ENCODE measurements at regions of chr6 and their contacts with region 1.

Region 1: GRCh38 chr6:3419624-3420272 is 37.1 kb downstream of the SLC22A23 start:
- DNase-seq: no peak
- ATAC-seq: no peak
- H3K4me3 ChIP-seq: no peak overlapping the region
- H3K27ac ChIP-seq: no peak overlapping the region
- H3K4me1 ChIP-seq: peaks cover 4% of the 10 kb centered on the region
- H3K27me3 ChIP-seq: no peaks in the 10 kb centered on the region
- CTCF ChIP-seq: no peak
- EP300 ChIP-seq: no peak
- POLR2A ChIP-seq: no peak
- RAD21 ChIP-seq: no peak

Region 2: GRCh38 chr6:3239110-3239830 is 180.5 kb before region 1 on chr6:
- CTCF ChIA-PET with region 1: no interaction called
- POLR2A ChIA-PET with region 1: no interaction called
- RAD21 ChIA-PET with region 1: no interaction called
- SMC1A ChIA-PET with region 1: no interaction called
- in situ Hi-C with region 1: no loop called
- intact Hi-C with region 1: no loop called
- DNase-seq: no peak
- ATAC-seq: no peak
- H3K4me3 ChIP-seq: no peak overlapping the region
- H3K27ac ChIP-seq: no peak overlapping the region
- H3K4me1 ChIP-seq: peaks cover 31% of the 10 kb centered on the region
- H3K27me3 ChIP-seq: no peaks in the 10 kb centered on the region; a peak in 1 of 4 replicates
- CTCF ChIP-seq: 0 out of 6 replicates have a peak, but pooled peaks of 1 of the 3 experiments have one; percentile 7
- EP300 ChIP-seq: no peak
- POLR2A ChIP-seq: no peak
- RAD21 ChIP-seq: no peak

Region 3: GRCh38 chr6:3433005-3433404 is 13.3 kb after region 1 on chr6:
- CTCF ChIA-PET with region 1: interaction called, 16 read pairs
- POLR2A ChIA-PET with region 1: interaction called, 16 read pairs
- RAD21 ChIA-PET with region 1: interaction called, 18 read pairs
- SMC1A ChIA-PET with region 1: interaction called, 12 read pairs
- in situ Hi-C with region 1: no loop called
- intact Hi-C with region 1: no loop called
- DNase-seq: no peak
- ATAC-seq: peak; percentile 56
- H3K4me3 ChIP-seq: no peak overlapping the region
- H3K27ac ChIP-seq: no peak overlapping the region
- H3K4me1 ChIP-seq: peaks cover 8% of the 10 kb centered on the region
- H3K27me3 ChIP-seq: no peaks in the 10 kb centered on the region
- CTCF ChIP-seq: peak; percentile 10 to 27 (median 18); a peak in 3 of 6 replicates
- EP300 ChIP-seq: no peak
- POLR2A ChIP-seq: no peak
- RAD21 ChIP-seq: no peak

Region 4: DNA sequence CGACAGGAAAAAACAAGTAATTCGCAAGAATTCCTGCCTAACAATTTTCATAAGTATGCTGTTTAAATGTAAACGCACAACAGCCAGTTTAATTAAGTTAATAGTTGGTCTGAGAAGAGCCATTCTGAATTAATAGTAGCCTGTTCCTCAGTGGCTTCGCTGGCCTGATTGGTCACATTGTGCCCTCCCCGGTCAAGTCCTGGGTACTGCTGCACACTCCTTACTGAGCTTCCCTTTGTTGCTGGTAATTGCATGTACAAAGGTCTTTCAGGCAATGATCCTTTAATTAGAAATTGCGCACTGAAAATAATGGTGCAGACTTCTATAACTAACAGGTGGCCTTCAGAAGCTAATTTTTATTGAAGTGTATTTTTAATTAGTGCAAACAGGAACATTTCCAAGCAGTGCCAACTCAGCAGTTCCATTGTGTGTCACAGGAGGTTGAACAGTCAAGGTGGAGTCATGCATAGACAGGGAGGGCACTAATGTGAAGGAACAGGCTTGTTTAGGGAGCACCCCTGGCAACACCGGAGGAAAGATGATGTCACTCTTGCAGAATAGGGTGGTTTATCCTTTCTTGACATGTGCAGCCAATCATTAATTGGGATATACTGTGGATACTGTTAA is 129.7 kb after region 1 on chr6:
- CTCF ChIA-PET with region 1: no interaction called
- POLR2A ChIA-PET with region 1: no interaction called
- RAD21 ChIA-PET with region 1: no interaction called
- SMC1A ChIA-PET with region 1: no interaction called
- in situ Hi-C with region 1: no loop called
- intact Hi-C with region 1: no loop called
- DNase-seq: no peak
- ATAC-seq: no peak
- H3K4me3 ChIP-seq: no peak overlapping the region
- H3K27ac ChIP-seq: no peak overlapping the region
- H3K4me1 ChIP-seq: no peaks in the 10 kb centered on the region
- H3K27me3 ChIP-seq: peaks cover 0 to 2% of the 10 kb centered on the region in 2 experiments; a peak in 1 of 4 replicates
- CTCF ChIP-seq: no peak
- EP300 ChIP-seq: no peak
- POLR2A ChIP-seq: no peak
- RAD21 ChIP-seq: no peak